Ovary (tissue), 10 donors: ENCODE measurements at regions of chr10 and their contacts with region 1.

Region 1: DNA sequence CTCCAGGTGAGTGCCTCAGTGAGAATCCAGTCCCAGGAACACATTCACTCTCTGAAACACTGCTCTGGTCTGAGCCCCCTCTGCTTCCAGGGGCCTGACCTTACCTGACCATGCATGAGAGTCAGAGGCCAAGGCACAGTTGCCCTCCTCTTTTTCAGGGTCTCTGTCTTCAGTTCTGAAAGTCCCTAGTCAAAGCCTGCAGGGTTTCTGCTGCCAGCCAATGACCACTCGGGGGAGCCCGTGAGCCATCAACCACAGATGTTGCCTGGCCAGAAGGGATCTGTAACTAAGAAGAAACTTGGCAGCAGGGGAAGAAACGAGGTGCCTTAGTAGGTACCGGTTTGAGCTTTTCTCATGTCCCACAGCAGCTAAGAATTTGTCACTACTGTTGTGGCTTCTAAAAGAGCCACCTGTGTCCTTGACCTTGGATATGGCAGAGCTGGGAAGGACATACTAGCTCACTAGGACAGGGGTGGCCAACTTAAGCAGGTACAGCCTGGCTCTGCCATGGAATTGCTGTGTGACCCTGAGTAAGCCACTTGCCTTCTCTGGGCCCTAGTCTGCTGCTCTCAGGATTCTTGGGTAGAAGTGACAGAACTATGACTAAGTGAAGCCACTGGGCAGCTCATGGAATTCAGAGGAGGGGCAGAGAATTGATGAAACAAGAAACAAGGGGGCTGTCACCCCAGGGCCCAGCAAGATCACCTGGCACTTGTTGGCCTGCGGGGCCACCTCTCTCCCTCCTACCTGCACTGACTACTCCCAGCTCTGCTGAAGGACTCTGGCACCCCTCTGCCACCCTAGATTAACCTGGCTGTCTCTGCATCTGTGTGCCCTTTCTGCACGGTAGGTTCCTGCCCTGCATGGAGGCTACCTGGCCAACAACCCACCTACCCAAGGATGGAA is 83.8 kb upstream of the GPR26 start:
- DNase-seq: peak; percentile 38 to 84 (median 69)
- H3K4me3 ChIP-seq: no peak overlapping the region
- H3K27ac ChIP-seq: no peak overlapping the region
- H3K4me1 ChIP-seq: no peaks in the 10 kb centered on the region
- H3K27me3 ChIP-seq: no peaks in the 10 kb centered on the region
- CTCF ChIP-seq: peak in 2 of 3 donors; percentile 39 to 62
- EP300 ChIP-seq: no peak
- POLR2A ChIP-seq: no peak

Region 2: GRCh38 chr10:123967396-123968243 is 385.3 kb after region 1 on chr10:
- intact Hi-C with region 1: loop called (anchors 2 kb)
- DNase-seq: peak; percentile 56 to 86 (median 80)
- H3K4me3 ChIP-seq: no peak overlapping the region
- H3K27ac ChIP-seq: no peak overlapping the region
- H3K4me1 ChIP-seq: no peaks in the 10 kb centered on the region
- H3K27me3 ChIP-seq: no peaks in the 10 kb centered on the region
- CTCF ChIP-seq: peak; percentile 76 to 87 (median 81)
- EP300 ChIP-seq: no peak
- POLR2A ChIP-seq: no peak